HCT116 (cell line): ENCODE measurements at regions of chr10 and their contacts with region 1.

Region 1: DNA sequence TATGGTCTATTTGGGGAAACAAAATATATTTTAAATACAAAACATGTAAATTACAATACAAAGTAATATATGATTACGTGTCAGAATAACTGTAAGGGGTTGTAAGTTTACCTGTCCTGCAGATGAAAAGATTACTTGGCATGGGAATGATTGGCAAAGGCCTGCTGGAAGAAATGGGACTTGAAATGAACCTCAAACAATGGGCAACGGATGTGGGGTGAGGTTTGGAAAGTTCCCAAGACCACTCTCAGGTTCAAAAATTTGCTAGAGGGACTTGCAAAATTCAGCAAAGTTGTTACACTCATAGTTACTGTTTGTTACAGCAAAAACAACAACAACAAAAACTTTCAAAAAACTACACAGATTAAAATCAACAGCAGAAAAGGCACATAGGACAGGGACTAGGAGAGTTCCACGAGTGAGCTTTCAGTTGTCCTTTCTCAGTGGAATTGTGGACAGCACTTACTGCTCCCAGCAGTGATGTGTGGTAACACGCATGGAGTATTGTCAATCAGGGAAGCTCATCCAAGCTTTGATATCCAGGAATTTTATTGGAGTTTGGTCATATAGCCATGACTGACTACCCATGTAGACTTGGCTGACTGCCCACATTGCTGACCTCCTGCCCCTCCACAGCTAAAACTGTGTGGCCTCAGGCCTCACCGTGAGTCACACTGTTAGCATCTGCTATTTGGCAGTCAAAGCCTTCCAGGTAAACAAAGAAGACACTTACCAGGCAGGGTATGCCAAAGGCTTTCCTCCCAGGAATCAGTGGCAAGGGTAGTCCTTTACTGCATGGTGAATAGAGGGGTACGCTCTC is 43.8 kb downstream of the EXOC6 start:
- DNase-seq: peak; percentile 96
- ATAC-seq: peak; percentile 96
- H3K4me3 ChIP-seq: peak overlapping the region in 1 of 2 experiments; percentile 29; a peak in 2 of 4 replicates
- H3K27ac ChIP-seq: peak overlapping the region; percentile 17; the same call in 1 of the 2 replicates
- H3K4me1 ChIP-seq: peaks cover 20 to 26% of the 10 kb centered on the region in 2 experiments
- H3K27me3 ChIP-seq: no peaks in the 10 kb centered on the region
- CTCF ChIP-seq: no peak
- POLR2A ChIP-seq: no peak
- RAD21 ChIP-seq: no peak

Region 2: GRCh38 chr10:92342796-92343195 is 549.3 kb before region 1 on chr10:
- CTCF ChIA-PET with region 1: no interaction called
- POLR2A ChIA-PET with region 1: no interaction called
- RAD21 ChIA-PET with region 1: no interaction called
- intact Hi-C with region 1: no loop called
- DNase-seq: no peak
- ATAC-seq: no peak
- H3K4me3 ChIP-seq: no peak overlapping the region
- H3K27ac ChIP-seq: no peak overlapping the region
- H3K4me1 ChIP-seq: peaks cover 0 to 9% of the 10 kb centered on the region in 2 experiments; a peak in 1 of 4 replicates
- H3K27me3 ChIP-seq: no peaks in the 10 kb centered on the region
- CTCF ChIP-seq: no peak
- POLR2A ChIP-seq: no peak
- RAD21 ChIP-seq: no peak

Region 3: DNA sequence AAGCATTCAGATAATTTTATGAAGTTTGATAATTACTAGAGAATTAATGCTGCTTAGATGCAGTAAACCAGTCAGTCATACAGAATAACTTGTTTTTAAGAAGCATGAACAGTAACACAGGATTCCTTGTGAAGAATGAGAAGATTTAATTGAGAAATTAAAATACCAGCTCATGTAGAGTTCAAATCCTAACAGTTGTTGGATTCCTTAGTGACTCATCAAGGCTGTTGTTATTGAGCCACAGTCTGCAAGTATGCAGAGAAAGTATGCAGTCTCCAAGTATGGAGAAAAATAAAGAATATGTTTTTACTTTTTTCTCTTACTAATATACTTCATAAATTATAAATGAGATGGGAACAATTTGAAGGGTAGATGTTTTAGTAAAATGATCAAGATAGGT is 138.3 kb after region 1 on chr10:
- CTCF ChIA-PET with region 1: no interaction called
- POLR2A ChIA-PET with region 1: no interaction called
- RAD21 ChIA-PET with region 1: no interaction called
- intact Hi-C with region 1: loop called (anchors 5 kb)
- DNase-seq: peak; percentile 8
- ATAC-seq: peak; percentile 83
- H3K4me3 ChIP-seq: no peak overlapping the region
- H3K27ac ChIP-seq: peak overlapping the region; percentile 57; the same call in 1 of the 2 replicates
- H3K4me1 ChIP-seq: peaks cover 19 to 37% of the 10 kb centered on the region in 2 experiments
- H3K27me3 ChIP-seq: no peaks in the 10 kb centered on the region
- CTCF ChIP-seq: no peak
- POLR2A ChIP-seq: no peak
- RAD21 ChIP-seq: no peak